B cell (primary cell): ENCODE measurements at regions of chr19 and their contacts with region 1.

Region 1: GRCh38 chr19:13099073-13099999 is 3.3 kb downstream of the LYL1 start:
- DNase-seq: peak; percentile 90
- ATAC-seq: peak; percentile 6
- H3K4me3 ChIP-seq: peak overlapping the region; percentile 47 to 98 (median 96)
- H3K4me3 Mint-ChIP-seq: peak overlapping the region; percentile 93
- H3K27ac ChIP-seq: peak overlapping the region; percentile 79 to 83
- H3K27ac Mint-ChIP-seq: peak overlapping the region; percentile 98
- H3K4me1 ChIP-seq: peaks cover 32 to 71% of the 10 kb centered on the region in 2 donors
- H3K4me1 Mint-ChIP-seq: peaks cover 66% of the 10 kb centered on the region
- H3K27me3 ChIP-seq: no peaks in the 10 kb centered on the region
- H3K27me3 Mint-ChIP-seq: no peaks in the 10 kb centered on the region
- CTCF ChIP-seq: no peak

Region 2: GRCh38 chr19:12872941-12873890 is 226.1 kb before region 1 on chr19:
- CTCF ChIA-PET with region 1: no interaction called
- POLR2A ChIA-PET with region 1: no interaction called
- intact Hi-C with region 1: no loop called
- DNase-seq: peak; percentile 69
- ATAC-seq: peak; percentile 72
- H3K4me3 ChIP-seq: peak overlapping the region in 2 of 5 experiments; percentile 34
- H3K4me3 Mint-ChIP-seq: peak overlapping the region; percentile 34
- H3K27ac ChIP-seq: no peak overlapping the region
- H3K27ac Mint-ChIP-seq: no peak overlapping the region
- H3K4me1 ChIP-seq: no peaks in the 10 kb centered on the region
- H3K4me1 Mint-ChIP-seq: no peaks in the 10 kb centered on the region
- H3K27me3 ChIP-seq: no peaks in the 10 kb centered on the region
- H3K27me3 Mint-ChIP-seq: no peaks in the 10 kb centered on the region
- CTCF ChIP-seq: no peak

Region 3: DNA sequence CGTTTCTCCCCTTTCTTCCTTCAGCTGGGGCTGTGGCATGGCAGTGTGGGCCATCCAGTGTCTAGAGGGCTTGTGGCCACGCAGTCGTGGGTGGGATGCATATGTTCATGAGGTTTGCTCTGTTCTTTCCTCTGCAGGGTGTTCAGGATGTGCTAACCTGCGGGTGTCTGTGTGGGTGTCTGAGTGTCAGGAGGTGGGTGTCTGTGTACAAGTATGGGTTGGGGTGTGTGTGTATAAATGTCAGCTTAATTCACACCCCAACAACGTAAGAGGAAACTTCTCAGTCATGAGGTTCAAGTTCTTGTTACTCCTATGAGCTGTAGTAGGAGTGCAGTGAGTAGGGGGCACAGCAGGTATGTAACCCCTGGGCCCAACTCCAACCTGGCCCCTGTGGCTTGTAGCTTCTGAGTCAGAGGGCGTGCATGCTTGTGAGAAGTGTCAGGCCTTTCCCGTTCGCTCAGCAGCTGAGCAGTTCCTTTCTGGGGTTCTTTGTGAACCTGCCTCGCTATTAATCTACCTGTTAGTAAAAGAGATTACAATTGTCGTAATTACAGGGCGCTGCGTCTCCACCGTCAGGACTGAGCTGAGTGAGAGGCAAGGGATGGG is 55.0 kb before region 1 on chr19:
- CTCF ChIA-PET with region 1: no interaction called
- POLR2A ChIA-PET with region 1: no interaction called
- intact Hi-C with region 1: no loop called
- DNase-seq: no peak
- ATAC-seq: no peak
- H3K4me3 ChIP-seq: no peak overlapping the region
- H3K4me3 Mint-ChIP-seq: no peak overlapping the region
- H3K27ac ChIP-seq: no peak overlapping the region
- H3K27ac Mint-ChIP-seq: no peak overlapping the region
- H3K4me1 ChIP-seq: peaks cover 0 to 4% of the 10 kb centered on the region in 2 donors
- H3K4me1 Mint-ChIP-seq: no peaks in the 10 kb centered on the region
- H3K27me3 ChIP-seq: no peaks in the 10 kb centered on the region
- H3K27me3 Mint-ChIP-seq: peaks cover 19% of the 10 kb centered on the region
- CTCF ChIP-seq: no peak

Region 4: GRCh38 chr19:13138916-13139198 is 39.5 kb after region 1 on chr19:
- CTCF ChIA-PET with region 1: no interaction called
- POLR2A ChIA-PET with region 1: no interaction called
- intact Hi-C with region 1: no loop called
- DNase-seq: no peak
- ATAC-seq: no peak
- H3K4me3 ChIP-seq: no peak overlapping the region
- H3K4me3 Mint-ChIP-seq: no peak overlapping the region
- H3K27ac ChIP-seq: no peak overlapping the region
- H3K27ac Mint-ChIP-seq: no peak overlapping the region
- H3K4me1 ChIP-seq: no peaks in the 10 kb centered on the region
- H3K4me1 Mint-ChIP-seq: no peaks in the 10 kb centered on the region
- H3K27me3 ChIP-seq: no peaks in the 10 kb centered on the region
- H3K27me3 Mint-ChIP-seq: no peaks in the 10 kb centered on the region
- CTCF ChIP-seq: no peak

Region 5: DNA sequence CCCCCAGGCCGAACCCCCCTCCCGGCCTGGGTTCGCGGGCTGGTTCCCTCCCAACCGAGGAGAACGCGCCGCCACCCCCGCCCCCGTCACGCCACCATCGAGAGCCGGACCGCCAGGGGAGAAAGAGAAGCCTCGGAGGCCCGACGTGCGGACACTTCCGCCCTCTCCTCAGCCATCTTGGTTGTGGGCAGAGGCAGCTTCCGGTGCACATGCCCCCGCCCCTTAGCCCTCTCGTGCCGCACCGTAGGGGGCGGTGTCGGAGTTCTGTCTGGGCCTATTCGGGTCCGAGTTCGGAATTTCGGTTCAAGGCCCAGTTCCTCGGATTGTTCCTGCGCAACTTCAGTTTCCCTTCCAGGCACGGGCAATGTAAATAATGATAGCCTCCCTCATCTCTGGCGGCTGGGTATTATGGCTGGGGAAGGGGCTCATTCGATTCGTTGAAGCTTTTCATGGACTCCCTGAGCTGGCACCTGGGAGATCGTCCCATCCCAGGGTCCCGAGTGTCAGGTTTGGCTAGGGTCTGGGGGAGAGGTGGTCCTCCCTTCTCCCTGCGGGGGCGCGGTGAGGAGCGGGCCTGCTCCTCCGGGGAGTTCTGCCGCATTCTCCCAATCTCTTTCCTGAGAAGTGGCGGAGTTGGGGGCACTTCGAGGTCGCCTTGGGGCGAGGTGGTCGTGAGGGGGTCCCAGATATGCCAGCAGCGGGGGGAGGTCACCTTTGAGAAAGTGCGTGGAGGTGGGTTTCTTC is 51.0 kb after region 1 on chr19 and contains the starts of genes IER2 and STX10:
- CTCF ChIA-PET with region 1: interaction called, 28 read pairs
- POLR2A ChIA-PET with region 1: interaction called, 45 read pairs
- intact Hi-C with region 1: loop called (anchors 1 kb)
- DNase-seq: peak; percentile 96
- ATAC-seq: peak; percentile 53
- H3K4me3 ChIP-seq: peak within 1 kb of the TSS; percentile 82 to 100 (median 98)
- H3K4me3 Mint-ChIP-seq: peak within 1 kb of the TSS; percentile 92
- H3K27ac ChIP-seq: peak within 1 kb of the TSS; percentile 87 to 96
- H3K27ac Mint-ChIP-seq: peak within 1 kb of the TSS; percentile 94
- H3K4me1 ChIP-seq: peaks cover 9 to 32% of the 10 kb centered on the region in 2 donors
- H3K4me1 Mint-ChIP-seq: peaks cover 33% of the 10 kb centered on the region
- H3K27me3 ChIP-seq: no peaks in the 10 kb centered on the region
- H3K27me3 Mint-ChIP-seq: no peaks in the 10 kb centered on the region
- CTCF ChIP-seq: peak; percentile 66
- total RNA-seq, gene IER2: 181 and 189 TPM in 2 replicates
- total RNA-seq, gene STX10: 48.4 and 59.0 TPM in 2 replicates

Region 6: DNA sequence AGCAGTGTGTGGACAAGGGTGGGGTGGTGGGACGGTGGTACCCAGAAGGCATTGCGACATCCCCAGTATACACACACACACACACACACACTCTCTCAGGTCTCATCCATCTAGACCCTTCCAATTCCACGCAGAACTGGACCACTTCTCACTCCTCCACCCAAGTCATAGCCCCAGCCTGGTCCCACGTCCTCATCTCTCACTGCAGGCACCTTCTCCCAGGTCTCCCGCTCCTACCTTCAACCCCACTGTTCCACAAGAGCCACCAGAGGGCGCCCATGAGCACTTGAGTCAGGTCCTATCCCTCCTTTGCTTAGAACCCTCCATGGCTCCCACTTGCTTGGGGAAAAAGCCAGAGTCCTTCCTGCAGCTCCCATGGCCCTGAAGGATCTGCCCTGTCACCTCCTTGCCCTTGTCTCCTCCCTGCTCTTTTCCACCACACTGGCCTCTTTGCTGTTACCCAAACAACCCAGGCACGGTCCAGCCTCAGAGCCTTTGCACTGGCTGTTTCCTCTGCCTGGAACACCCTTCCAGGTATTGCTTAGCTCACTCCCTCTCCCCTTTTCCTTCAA is 113.5 kb after region 1 on chr19:
- CTCF ChIA-PET with region 1: interaction called, 5 read pairs
- POLR2A ChIA-PET with region 1: interaction called, 3 read pairs
- intact Hi-C with region 1: loop called (anchors 1 kb)
- DNase-seq: peak; percentile 77
- ATAC-seq: no peak
- H3K4me3 ChIP-seq: no peak overlapping the region
- H3K4me3 Mint-ChIP-seq: peak overlapping the region; percentile 44
- H3K27ac ChIP-seq: no peak overlapping the region
- H3K27ac Mint-ChIP-seq: peak overlapping the region; percentile 29
- H3K4me1 ChIP-seq: peaks cover 41 to 54% of the 10 kb centered on the region in 2 donors
- H3K4me1 Mint-ChIP-seq: peaks cover 62% of the 10 kb centered on the region
- H3K27me3 ChIP-seq: no peaks in the 10 kb centered on the region
- H3K27me3 Mint-ChIP-seq: no peaks in the 10 kb centered on the region
- CTCF ChIP-seq: peak; percentile 69